Endothelial cell of umbilical vein (primary cell): ENCODE measurements at regions of chr4 and their contacts with region 1.

Region 1: GRCh38 chr4:94304365-94304971 is 38.2 kb downstream of the HPGDS start:
- DNase-seq: peak; percentile 66
- H3K4me3 ChIP-seq: no peak overlapping the region
- H3K27ac ChIP-seq: no peak overlapping the region
- H3K4me1 ChIP-seq: peaks cover 20% of the 10 kb centered on the region
- H3K27me3 ChIP-seq: no peaks in the 10 kb centered on the region
- CTCF ChIP-seq: peak; percentile 44 to 45
- POLR2A ChIP-seq: no peak

Region 2: GRCh38 chr4:94365304-94365703 is 60.8 kb after region 1 on chr4:
- CTCF ChIA-PET with region 1: no interaction called
- POLR2A ChIA-PET with region 1: no interaction called
- dilution Hi-C with region 1: no loop called
- intact Hi-C with region 1: loop called (anchors 2 kb)
- DNase-seq: peak; percentile 66
- H3K4me3 ChIP-seq: no peak overlapping the region
- H3K27ac ChIP-seq: peak overlapping the region; percentile 89
- H3K4me1 ChIP-seq: peaks cover 37% of the 10 kb centered on the region
- H3K27me3 ChIP-seq: no peaks in the 10 kb centered on the region
- CTCF ChIP-seq: no peak
- POLR2A ChIP-seq: no peak

Region 3: DNA sequence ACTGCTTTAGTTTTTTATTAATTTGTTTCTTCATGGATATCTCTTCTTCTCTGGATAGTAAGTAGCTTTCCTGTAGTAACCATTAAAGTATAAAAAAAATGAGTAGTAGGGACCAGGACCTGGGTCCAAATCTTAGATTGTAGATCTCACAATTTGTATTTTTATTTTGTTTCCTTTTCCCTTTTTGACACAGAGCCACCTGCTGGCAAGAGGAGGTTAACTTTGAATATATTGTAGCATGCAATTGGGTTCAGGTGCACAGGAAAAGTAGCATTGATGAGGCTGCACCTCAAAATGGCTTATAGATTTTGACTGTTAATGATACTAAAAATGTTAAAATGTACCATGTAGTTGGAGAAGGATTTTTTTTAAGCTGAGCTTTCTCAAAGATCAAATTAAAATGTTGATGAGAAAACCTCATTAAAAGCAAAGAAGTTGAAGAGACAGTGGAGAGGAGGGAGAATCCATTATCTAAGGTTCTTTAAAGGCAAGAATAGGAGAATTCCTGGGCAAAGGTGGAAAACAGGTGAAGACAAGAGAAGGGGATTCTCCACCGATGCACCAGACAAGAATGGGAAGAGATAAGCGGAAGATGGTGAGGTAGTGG is 86.4 kb after region 1 on chr4:
- CTCF ChIA-PET with region 1: interaction called, 46 read pairs
- POLR2A ChIA-PET with region 1: no interaction called
- dilution Hi-C with region 1: no loop called
- intact Hi-C with region 1: loop called (anchors 1 kb)
- DNase-seq: peak; percentile 41
- H3K4me3 ChIP-seq: no peak overlapping the region
- H3K27ac ChIP-seq: no peak overlapping the region
- H3K4me1 ChIP-seq: no peaks in the 10 kb centered on the region
- H3K27me3 ChIP-seq: no peaks in the 10 kb centered on the region
- CTCF ChIP-seq: peak; percentile 33 to 39
- POLR2A ChIP-seq: no peak

Region 4: DNA sequence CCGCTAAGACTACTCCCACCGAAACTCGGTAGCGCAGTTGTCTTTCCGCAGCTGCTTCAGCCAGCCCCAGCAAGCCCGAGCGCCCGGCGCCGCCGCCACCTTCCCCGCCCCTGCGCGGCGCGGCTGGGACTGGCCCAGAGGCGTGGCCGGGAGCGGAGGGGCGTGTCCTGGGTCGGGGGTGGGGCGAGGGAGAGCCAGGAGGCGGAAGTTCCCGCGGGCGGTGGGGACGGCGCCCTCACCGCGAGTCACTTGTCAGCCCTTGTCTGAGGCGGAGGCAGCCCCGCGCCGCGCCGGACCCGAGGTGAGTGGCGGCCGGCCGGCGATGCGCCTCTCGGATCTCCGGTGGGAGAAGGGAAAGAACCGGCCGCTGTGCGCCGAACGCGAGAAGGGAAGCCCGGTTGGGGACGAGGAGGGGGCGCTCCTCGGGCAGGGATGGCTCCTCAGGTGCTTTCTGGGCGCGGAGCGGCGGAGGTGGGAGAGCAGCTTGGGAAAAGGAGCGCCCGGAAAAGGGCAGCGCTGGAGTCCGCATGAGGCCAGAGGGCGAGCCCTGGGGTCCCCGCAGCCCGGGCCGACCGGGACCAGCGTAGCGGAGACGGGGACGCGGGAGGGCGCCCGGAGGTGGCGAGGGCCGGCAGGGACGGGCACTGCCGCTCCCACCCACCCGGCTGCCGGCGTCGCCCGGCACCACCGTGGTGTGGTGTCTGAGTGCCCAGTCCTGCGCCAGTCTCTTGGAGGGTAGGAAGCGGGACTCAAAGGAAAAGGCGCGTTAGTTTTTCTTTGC is 147.4 kb after region 1 on chr4 and contains the start of gene PDLIM5:
- CTCF ChIA-PET with region 1: no interaction called
- POLR2A ChIA-PET with region 1: no interaction called
- dilution Hi-C with region 1: no loop called
- intact Hi-C with region 1: loop called (anchors 2 kb)
- DNase-seq: peak; percentile 93
- H3K4me3 ChIP-seq: peak within 1 kb of the TSS; percentile 60 to 99 (median 98)
- H3K27ac ChIP-seq: peak within 1 kb of the TSS; percentile 80
- H3K4me1 ChIP-seq: peaks cover 40% of the 10 kb centered on the region
- H3K27me3 ChIP-seq: no peaks in the 10 kb centered on the region
- CTCF ChIP-seq: no peak
- POLR2A ChIP-seq: peak; percentile 96
- total RNA-seq, gene PDLIM5: 310 and 323 TPM in 2 replicates

Region 5: DNA sequence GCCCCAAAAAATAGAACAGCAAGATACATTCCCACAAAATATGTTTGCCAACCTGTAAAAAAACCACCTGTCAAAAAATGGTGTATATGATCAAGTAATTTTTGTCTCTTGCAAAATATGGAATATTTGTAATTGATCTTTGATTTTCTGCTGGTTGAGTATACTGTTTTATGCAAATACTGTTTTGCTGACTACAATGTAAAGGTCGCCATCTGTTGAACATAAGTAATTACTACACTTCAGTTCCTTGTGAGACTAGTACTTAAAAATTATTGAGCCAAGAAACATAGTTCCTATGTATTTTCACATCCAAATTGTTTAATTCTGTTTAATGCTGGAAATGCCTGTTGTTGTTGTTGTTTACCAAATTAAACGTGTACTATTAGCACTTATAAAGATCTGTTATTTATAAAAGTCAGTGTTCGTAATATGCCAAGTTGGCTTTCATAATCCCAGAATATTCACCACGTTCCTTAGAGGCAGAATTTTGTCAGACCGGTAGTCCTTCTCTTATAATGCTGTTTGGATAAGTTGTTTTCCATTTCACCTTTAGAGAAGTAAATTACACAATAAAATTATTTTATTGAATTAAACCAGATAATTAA is 291.5 kb after region 1 on chr4:
- CTCF ChIA-PET with region 1: interaction called, 3 read pairs
- POLR2A ChIA-PET with region 1: no interaction called
- dilution Hi-C with region 1: no loop called
- intact Hi-C with region 1: loop called (anchors 1 kb)
- DNase-seq: peak; percentile 76
- H3K4me3 ChIP-seq: no peak overlapping the region
- H3K27ac ChIP-seq: no peak overlapping the region
- H3K4me1 ChIP-seq: peaks cover 11% of the 10 kb centered on the region
- H3K27me3 ChIP-seq: no peaks in the 10 kb centered on the region
- CTCF ChIP-seq: peak; percentile 26 to 28
- POLR2A ChIP-seq: no peak

Region 6: DNA sequence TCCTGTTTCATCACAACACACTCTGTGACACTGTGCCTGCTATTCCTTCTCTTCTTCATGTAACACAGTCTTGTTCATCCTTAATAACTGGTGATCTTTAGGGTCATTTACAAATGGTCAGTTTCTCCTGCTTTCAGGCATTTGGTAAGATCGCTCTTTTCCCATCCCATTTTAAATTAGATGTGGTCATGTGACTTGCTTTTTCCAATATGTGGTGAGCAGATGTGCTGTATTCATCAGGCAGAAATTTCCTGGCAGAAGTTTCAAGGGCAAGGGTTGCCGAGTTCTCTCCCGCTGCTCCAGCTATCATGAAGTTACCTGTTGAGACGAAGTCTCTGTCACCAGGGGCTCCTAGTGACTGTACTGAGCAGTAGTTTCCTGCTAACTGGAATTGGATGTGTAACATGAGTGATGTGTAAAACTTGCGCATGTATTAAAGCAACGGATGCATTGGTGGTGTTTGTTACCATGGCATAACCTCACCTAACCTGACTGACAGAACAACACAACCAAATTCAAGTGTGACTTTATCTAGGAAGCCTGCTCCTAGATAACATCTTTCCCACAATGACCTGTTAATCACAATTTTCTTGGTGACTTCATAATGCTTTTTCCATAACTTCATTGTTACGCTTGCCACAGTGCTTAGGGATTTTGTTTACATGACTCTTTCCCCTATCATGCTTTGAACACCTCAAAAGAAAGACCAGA is 423.7 kb after region 1 on chr4:
- CTCF ChIA-PET with region 1: interaction called, 5 read pairs
- POLR2A ChIA-PET with region 1: no interaction called
- dilution Hi-C with region 1: no loop called
- intact Hi-C with region 1: loop called (anchors 10 kb)
- DNase-seq: no peak
- H3K4me3 ChIP-seq: no peak overlapping the region
- H3K27ac ChIP-seq: no peak overlapping the region
- H3K4me1 ChIP-seq: no peaks in the 10 kb centered on the region
- H3K27me3 ChIP-seq: no peaks in the 10 kb centered on the region
- CTCF ChIP-seq: no peak
- POLR2A ChIP-seq: no peak

Region 7: GRCh38 chr4:95124906-95125504 is 820.5 kb after region 1 on chr4:
- CTCF ChIA-PET with region 1: interaction called, 4 read pairs
- POLR2A ChIA-PET with region 1: no interaction called
- dilution Hi-C with region 1: no loop called
- intact Hi-C with region 1: loop called (anchors 10 kb)
- DNase-seq: peak; percentile 68
- H3K4me3 ChIP-seq: no peak overlapping the region
- H3K27ac ChIP-seq: no peak overlapping the region
- H3K4me1 ChIP-seq: peaks cover 14% of the 10 kb centered on the region
- H3K27me3 ChIP-seq: no peaks in the 10 kb centered on the region
- CTCF ChIP-seq: peak; percentile 53 to 55
- POLR2A ChIP-seq: no peak